ENCODE measurements at regions of chr11 and their contacts with region 1.

Region 1: GRCh38 chr11:33857933-33858371 is 33.9 kb downstream of the LMO2 start:
- DNase-seq: peak; percentile 80
- H3K4me3 Mint-ChIP-seq: no peak overlapping the region
- H3K27ac Mint-ChIP-seq: no peak overlapping the region
- H3K4me1 Mint-ChIP-seq: no peaks in the 10 kb centered on the region
- H3K27me3 Mint-ChIP-seq: peaks cover 33% of the 10 kb centered on the region
- CTCF ChIP-seq: peak; percentile 91

Region 2: GRCh38 chr11:33808228-33808828 is 49.6 kb before region 1 on chr11:
- CTCF ChIA-PET with region 1: interaction called, 12 read pairs
- POLR2A ChIA-PET with region 1: no interaction called
- intact Hi-C with region 1: no loop called
- DNase-seq: peak; percentile 81
- H3K4me3 Mint-ChIP-seq: no peak overlapping the region
- H3K27ac Mint-ChIP-seq: no peak overlapping the region
- H3K4me1 Mint-ChIP-seq: no peaks in the 10 kb centered on the region
- H3K27me3 Mint-ChIP-seq: peaks cover 13% of the 10 kb centered on the region
- CTCF ChIP-seq: peak; percentile 85

Region 3: DNA sequence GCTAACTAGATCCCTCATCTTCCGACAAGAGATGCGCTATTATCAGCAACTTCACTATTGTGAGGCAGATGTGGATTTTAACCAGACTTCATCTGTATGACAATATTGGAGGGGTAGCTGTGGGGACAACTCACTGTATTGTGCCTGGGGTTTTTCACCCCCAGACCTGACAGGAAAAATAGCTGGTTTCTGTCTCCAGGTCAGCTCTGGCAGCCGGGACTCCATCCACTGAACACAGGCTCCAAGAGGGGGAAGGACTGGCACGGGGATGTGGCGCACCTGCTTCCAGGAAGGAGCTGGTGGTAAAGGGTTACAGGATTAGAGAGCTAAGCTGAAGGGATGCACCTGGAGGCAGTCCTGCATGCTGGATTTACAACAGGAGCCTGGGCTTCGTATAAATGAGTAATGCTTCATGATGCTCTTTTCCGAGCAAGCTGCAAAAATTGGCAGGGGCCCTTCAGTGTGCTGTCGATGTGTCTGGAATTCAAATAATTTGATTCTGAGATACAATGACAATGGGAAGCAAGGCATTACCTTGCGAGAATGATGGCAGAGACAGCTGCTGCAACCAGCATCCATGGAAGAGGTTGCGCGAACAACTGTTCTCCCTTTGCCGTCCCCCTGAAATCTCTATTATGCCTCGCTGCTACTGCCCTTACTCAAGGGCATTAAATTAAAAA is 15.6 kb before region 1 on chr11:
- CTCF ChIA-PET with region 1: interaction called, 20 read pairs
- POLR2A ChIA-PET with region 1: no interaction called
- intact Hi-C with region 1: no loop called
- DNase-seq: no peak
- H3K4me3 Mint-ChIP-seq: no peak overlapping the region
- H3K27ac Mint-ChIP-seq: no peak overlapping the region
- H3K4me1 Mint-ChIP-seq: no peaks in the 10 kb centered on the region
- H3K27me3 Mint-ChIP-seq: peaks cover 81% of the 10 kb centered on the region
- CTCF ChIP-seq: no peak

Region 4: GRCh38 chr11:33874910-33875490 is 17.0 kb after region 1 on chr11:
- CTCF ChIA-PET with region 1: interaction called, 17 read pairs
- POLR2A ChIA-PET with region 1: interaction called, 3 read pairs
- intact Hi-C with region 1: no loop called
- DNase-seq: no peak
- H3K4me3 Mint-ChIP-seq: no peak overlapping the region
- H3K27ac Mint-ChIP-seq: no peak overlapping the region
- H3K4me1 Mint-ChIP-seq: no peaks in the 10 kb centered on the region
- H3K27me3 Mint-ChIP-seq: peaks cover 17% of the 10 kb centered on the region
- CTCF ChIP-seq: no peak

Region 5: DNA sequence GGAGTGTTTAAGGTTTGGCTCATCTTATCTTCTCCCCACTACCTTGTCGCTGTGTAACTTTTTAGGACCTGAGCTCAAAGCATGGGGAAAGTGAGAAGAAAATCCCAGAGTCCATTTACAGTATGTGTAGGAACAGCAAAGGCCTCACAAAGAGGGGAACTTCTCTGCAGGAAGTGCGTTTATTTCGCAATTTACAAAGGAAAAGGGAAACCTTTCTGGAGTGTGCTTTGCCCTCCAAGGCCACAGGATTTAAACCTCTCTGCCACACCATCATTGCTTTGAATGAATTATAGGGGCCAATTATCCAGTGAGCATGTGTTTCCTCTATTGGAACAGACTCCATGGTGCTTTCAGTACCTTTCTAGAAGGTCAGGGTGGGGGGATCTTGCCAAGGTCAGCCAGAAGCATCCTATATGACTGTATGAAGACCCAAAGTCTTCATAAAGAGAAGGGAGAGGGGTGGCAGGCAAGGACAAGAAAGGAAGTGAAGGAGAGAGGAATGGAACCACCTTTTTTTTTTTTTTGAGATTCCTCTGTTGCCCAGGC is 102.0 kb after region 1 on chr11:
- CTCF ChIA-PET with region 1: interaction called, 18 read pairs
- POLR2A ChIA-PET with region 1: no interaction called
- intact Hi-C with region 1: no loop called
- DNase-seq: no peak
- H3K4me3 Mint-ChIP-seq: no peak overlapping the region
- H3K27ac Mint-ChIP-seq: no peak overlapping the region
- H3K4me1 Mint-ChIP-seq: no peaks in the 10 kb centered on the region
- H3K27me3 Mint-ChIP-seq: no peaks in the 10 kb centered on the region
- CTCF ChIP-seq: no peak

Region 6: GRCh38 chr11:33970984-33971466 is 113.1 kb after region 1 on chr11:
- CTCF ChIA-PET with region 1: interaction called, 119 read pairs
- POLR2A ChIA-PET with region 1: interaction called, 4 read pairs
- intact Hi-C with region 1: loop called (anchors 1 kb)
- DNase-seq: peak; percentile 66
- H3K4me3 Mint-ChIP-seq: no peak overlapping the region
- H3K27ac Mint-ChIP-seq: no peak overlapping the region
- H3K4me1 Mint-ChIP-seq: no peaks in the 10 kb centered on the region
- H3K27me3 Mint-ChIP-seq: no peaks in the 10 kb centered on the region
- CTCF ChIP-seq: peak; percentile 55

Region 7: DNA sequence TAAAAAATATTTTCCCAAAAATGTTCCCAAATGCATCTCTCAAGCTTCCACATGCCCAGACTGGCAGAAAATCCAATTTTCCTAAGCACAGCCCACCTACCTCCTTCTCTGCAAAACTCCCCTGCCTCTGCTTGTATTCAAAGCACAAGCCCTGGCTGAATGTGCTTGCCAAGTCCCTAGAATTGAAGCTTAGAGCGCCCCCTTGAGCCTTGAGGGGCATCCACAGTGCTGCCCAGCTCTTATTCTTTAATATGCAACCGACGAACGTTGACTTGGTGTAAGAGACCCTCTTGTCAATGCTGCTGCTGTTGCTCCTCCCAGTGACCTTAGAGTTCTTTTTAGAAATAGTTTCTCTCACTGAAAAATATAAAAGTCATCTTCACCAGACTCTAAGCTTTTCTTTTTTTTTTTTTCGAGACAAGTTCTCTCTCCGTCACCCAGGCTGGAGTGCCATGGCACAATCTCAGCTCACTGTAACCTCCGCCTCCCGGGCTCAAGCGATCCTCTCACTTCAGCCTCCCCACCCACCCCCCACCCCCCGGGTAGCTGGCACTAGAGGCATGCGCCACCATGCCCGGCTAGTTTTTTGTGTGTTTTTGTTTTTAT is 130.1 kb after region 1 on chr11:
- CTCF ChIA-PET with region 1: interaction called, 77 read pairs
- POLR2A ChIA-PET with region 1: interaction called, 4 read pairs
- intact Hi-C with region 1: loop called (anchors 1 kb)
- DNase-seq: peak; percentile 78
- H3K4me3 Mint-ChIP-seq: no peak overlapping the region
- H3K27ac Mint-ChIP-seq: no peak overlapping the region
- H3K4me1 Mint-ChIP-seq: no peaks in the 10 kb centered on the region
- H3K27me3 Mint-ChIP-seq: no peaks in the 10 kb centered on the region
- CTCF ChIP-seq: peak; percentile 62

Region 8: DNA sequence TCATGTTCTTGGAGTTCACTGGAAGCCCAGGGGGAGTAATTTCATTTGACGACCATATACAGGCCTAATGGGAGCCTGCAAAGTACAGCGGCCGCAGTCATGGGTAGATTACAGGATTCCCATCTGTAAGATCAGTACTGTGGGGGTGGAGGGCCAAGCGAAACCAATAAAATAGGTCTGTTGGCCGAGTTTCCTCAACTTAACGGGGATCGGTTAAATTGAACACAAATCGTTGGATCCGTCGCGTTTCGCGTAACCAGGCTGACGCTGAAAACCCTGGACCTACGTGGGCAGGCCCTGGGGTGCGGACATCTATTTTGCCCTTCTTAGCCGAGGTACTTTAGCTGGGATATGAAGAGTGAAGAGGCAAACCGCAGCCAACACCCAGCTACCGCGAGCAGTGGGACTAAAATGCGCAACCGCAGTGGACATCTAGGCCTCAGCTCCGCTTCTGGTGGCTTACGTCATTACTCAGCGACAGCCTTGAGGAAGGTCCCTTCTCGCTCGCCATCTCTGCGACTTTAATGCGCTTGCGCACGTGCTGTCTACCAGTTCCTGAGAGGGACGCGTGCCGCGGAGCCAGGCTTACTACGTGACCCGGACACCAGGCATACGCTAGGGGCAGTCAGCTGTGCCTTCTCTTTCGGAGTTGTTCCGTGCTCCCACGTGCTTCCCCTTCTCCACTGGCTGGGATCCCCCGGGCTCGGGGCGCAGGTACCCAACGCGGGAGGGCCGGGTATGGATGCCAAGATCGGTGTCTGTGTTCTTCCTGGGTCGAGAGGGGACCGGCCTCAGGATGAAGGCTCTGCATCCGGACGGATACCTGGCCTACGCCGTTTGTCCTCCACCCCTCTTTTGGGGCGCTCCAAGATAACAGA is 247.4 kb after region 1 on chr11 and contains the start of gene NAT10:
- CTCF ChIA-PET with region 1: no interaction called
- POLR2A ChIA-PET with region 1: no interaction called
- intact Hi-C with region 1: no loop called
- DNase-seq: peak; percentile 98
- H3K4me3 Mint-ChIP-seq: peak within 1 kb of the TSS; percentile 97
- H3K27ac Mint-ChIP-seq: peak within 1 kb of the TSS; percentile 96
- H3K4me1 Mint-ChIP-seq: peaks cover 24% of the 10 kb centered on the region
- H3K27me3 Mint-ChIP-seq: no peaks in the 10 kb centered on the region
- CTCF ChIP-seq: no peak
- total RNA-seq, gene NAT10: 68.9 and 89.5 TPM in 2 replicates

Region 9: GRCh38 chr11:34501500-34501899 is 643.5 kb after region 1 on chr11:
- CTCF ChIA-PET with region 1: no interaction called
- POLR2A ChIA-PET with region 1: no interaction called
- intact Hi-C with region 1: no loop called
- DNase-seq: peak; percentile 65
- H3K4me3 Mint-ChIP-seq: no peak overlapping the region
- H3K27ac Mint-ChIP-seq: peak overlapping the region; percentile 49
- H3K4me1 Mint-ChIP-seq: peaks cover 14% of the 10 kb centered on the region
- H3K27me3 Mint-ChIP-seq: no peaks in the 10 kb centered on the region
- CTCF ChIP-seq: no peak